GM18951 (cell line): ENCODE measurements at regions of chr2 and their contacts with region 1.

Region 1: DNA sequence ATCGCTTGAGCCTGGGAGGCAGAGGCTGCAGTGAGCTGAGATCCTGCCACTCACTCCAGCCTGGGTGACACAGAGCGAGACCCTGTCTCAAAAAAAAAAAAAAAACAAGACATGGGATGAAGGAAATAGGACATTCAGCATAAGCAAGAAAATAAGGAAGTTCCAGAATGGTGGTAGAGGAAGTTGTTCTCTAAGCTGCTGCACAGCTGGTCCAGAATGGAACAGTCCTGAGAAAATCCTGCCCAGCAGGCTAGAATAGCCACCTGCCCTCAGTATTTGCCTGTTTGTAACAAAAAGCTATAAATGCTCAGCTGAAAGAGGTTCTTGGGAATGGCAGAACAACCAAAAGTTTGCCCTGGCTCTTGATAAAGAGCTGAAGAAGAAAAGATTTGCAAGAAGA is 11.1 kb upstream of the MAPRE3 start:
- POLR2A ChIP-seq: no peak

Region 2: DNA sequence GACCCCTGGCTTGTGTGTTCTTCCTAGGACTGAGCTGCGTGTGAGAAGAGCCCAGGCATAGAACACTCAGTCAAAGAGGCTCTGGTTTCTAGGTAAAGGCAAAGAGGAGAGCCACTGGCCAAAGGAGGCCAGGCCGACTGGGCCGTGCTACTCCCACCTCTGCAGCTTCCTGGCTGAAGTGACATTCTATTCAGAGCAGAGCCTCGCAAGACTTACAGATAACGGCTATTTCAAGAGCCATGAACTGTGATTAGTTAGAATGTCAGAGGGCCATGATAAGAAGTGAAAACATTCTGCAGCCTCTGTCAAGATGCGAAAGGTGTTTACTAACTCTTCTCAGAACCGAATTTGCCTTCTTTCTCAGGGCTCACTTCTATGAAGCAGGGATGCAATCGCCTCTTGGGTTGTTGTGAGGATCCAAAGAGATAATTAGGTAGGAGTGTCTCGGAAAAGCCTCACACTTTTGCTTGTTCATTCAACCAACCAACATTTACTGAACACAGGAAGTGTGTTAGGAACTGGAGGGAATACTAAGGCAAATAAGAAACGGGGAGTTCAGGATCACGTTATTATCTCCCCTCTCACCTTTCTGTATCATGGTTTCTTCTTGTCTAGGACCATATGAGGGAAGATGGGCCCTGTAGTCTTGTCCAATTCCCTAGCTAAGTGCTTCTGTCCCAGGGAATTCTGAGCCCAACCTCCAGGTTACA is 312.5 kb after region 1 on chr2:
- in situ Hi-C with region 1: loop called (anchors 10 kb)
- POLR2A ChIP-seq: no peak